HepG2 (cell line): ENCODE measurements at regions of chr16 and their contacts with region 1.

Region 1: DNA sequence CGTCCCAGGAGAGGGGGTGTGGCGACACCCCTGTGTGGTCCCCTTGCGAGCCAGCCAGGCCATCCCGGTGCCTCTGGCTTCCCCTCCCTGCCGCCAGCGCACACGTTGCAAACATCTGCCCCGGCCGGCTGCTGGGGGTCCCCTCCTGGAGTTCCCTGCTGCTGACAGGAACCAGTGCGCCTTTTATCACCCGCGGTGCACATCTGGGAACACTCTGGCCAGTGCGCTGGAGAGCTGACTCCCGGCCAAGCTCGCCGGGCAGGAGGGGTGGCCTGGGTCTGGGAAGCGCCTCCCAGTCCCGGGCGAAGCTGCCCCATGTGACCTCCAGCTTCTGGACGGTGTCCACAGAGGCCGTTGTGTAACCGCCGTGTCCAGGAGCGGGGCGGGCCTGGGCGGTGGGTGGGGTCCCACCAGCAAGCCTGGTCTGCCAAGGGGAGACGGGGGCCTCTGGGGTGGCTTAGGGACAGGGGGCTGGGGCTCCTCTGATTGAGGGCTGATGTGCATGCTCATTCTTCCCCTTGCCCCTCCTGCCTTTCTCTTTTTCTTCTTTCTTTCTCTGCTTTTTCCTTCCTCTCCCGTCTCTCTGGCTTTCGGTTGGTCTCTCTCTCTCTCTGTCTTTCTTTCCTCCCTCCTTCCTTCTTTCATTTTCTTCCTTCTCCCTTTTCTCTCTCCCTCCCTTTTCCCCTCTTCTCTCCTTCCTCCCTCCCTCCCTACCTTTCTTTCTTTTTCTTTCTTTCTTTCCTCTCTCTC is 25.2 kb upstream of the CIBAR2 start:
- DNase-seq: peak; percentile 87
- ATAC-seq: peak; percentile 85
- H3K4me3 ChIP-seq: peak overlapping the region; percentile 49 to 76 (median 60)
- H3K27ac ChIP-seq: peak overlapping the region; percentile 80
- H3K4me1 ChIP-seq: peaks cover 85% of the 10 kb centered on the region
- H3K27me3 ChIP-seq: peaks cover 0 to 3% of the 10 kb centered on the region in 2 experiments; a peak in 2 of 5 replicates
- CTCF ChIP-seq: no peak; the same call in 1 of the 2 replicates
- EP300 ChIP-seq: no peak; a peak in 1 of 4 replicates
- POLR2A ChIP-seq: no peak; a peak in 2 of 4 replicates
- RAD21 ChIP-seq: no peak; the same call in 1 of the 2 replicates

Region 2: DNA sequence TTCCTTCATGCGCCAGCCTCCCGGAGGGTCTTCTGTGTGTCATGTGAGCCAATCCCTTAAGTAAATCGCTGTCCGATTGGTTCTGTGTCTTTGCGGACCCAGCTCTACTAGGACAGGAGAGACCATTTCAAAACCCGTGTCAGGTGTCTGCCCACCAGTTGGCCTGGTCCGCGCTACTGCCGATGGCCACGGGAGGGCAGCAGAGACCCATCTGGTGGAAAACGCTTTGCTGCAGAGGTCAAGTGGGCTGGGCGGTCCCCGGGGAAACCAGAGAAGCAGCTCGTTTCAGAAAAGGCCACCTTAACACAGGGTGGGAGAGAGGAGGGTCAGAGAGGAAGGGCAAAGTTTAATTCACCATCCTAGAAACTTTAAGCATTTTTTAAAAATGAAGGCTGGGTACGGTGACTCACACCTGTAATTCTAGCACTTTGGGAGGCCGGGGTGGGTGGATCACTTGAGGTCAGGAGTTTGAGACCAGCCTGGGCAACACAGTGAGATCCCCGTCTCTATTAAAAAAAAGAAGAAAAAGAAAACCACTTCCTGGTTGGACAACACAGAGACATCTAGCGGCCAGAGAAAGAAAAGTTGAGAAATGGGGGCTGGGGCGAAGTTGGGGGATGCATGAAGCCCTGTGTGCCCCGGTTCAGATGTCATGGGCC is 22.5 kb before region 1 on chr16:
- CTCF ChIA-PET with region 1: no interaction called
- POLR2A ChIA-PET with region 1: interaction called, 12 read pairs
- in situ Hi-C with region 1: no loop called
- intact Hi-C with region 1: no loop called
- DNase-seq: peak; percentile 78
- ATAC-seq: peak; percentile 88
- H3K4me3 ChIP-seq: 0 out of 6 replicates have a peak overlapping the region, but pooled peaks of 1 of the 3 experiments have one; percentile 0
- H3K27ac ChIP-seq: no peak overlapping the region
- H3K4me1 ChIP-seq: peaks cover 14% of the 10 kb centered on the region
- H3K27me3 ChIP-seq: peaks cover 15 to 44% of the 10 kb centered on the region in 2 experiments
- CTCF ChIP-seq: peak; percentile 99
- EP300 ChIP-seq: no peak
- POLR2A ChIP-seq: no peak
- RAD21 ChIP-seq: peak; percentile 99

Region 3: GRCh38 chr16:85126705-85127419 is 10.6 kb before region 1 on chr16:
- CTCF ChIA-PET with region 1: no interaction called
- POLR2A ChIA-PET with region 1: interaction called, 20 read pairs
- in situ Hi-C with region 1: no loop called
- intact Hi-C with region 1: no loop called
- DNase-seq: no peak
- ATAC-seq: peak; percentile 44
- H3K4me3 ChIP-seq: peak overlapping the region in 1 of 3 experiments; percentile 47; a peak in 1 of 6 replicates
- H3K27ac ChIP-seq: no peak overlapping the region
- H3K4me1 ChIP-seq: peaks cover 33% of the 10 kb centered on the region
- H3K27me3 ChIP-seq: peaks cover 13 to 52% of the 10 kb centered on the region in 2 experiments; a peak in 4 of 5 replicates
- CTCF ChIP-seq: peak; percentile 18; the same call in 1 of the 2 replicates
- EP300 ChIP-seq: no peak
- POLR2A ChIP-seq: no peak
- RAD21 ChIP-seq: no peak

Region 4: DNA sequence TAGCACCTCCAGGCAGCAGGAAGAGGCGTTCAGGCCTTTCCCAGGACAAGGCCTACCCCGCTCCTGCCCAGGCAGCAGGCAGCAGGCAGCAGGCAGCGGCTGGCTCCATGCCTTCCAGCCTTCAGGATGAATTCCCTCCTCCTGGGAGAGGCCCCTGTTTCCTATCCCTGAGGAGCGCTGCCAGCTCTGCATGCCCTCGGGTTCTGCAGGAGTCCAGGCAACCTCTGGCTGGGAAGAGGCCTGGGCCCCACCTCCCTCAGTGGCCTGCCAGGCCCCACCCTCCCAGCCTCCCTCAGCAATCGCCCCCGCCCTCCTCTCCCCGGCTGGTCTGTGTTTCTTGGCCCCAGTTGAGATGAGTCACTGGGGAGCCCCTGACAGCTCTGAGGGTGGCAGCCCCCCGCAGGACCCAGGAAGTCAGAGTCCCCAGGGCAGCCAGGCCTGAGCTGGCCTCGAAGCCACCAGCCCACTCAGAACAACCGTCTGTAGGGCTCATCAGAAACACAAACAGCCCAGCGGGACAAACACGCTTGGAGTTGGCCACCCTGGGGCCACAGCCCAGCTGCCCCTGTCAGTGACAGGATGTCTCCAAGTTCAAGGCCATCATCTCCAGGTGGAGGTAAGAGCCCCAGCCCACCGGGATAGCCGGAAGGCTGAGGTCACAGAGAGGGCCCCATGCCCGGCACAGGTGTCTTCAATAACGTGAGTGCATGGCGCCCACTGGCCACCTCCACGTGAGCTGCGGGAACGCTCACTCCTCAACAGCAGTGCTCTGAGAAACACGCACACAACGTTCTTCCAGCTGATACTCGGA is 14.3 kb after region 1 on chr16:
- CTCF ChIA-PET with region 1: no interaction called
- POLR2A ChIA-PET with region 1: interaction called, 293 read pairs
- in situ Hi-C with region 1: no loop called
- intact Hi-C with region 1: no loop called
- DNase-seq: no peak
- ATAC-seq: peak; percentile 70
- H3K4me3 ChIP-seq: peak overlapping the region in 1 of 3 experiments; percentile 56; a peak in 2 of 6 replicates
- H3K27ac ChIP-seq: no peak overlapping the region
- H3K4me1 ChIP-seq: peaks cover 68% of the 10 kb centered on the region
- H3K27me3 ChIP-seq: peaks cover 4 to 23% of the 10 kb centered on the region in 2 experiments
- CTCF ChIP-seq: peak; percentile 38
- EP300 ChIP-seq: no peak
- POLR2A ChIP-seq: no peak
- RAD21 ChIP-seq: no peak

Region 5: GRCh38 chr16:85162478-85163277 is 25.2 kb after region 1 on chr16:
- CTCF ChIA-PET with region 1: no interaction called
- POLR2A ChIA-PET with region 1: interaction called, 293 read pairs
- in situ Hi-C with region 1: no loop called
- intact Hi-C with region 1: loop called (anchors 2 kb)
- DNase-seq: no peak
- ATAC-seq: peak; percentile 7; the same call in 2 of the 3 replicates
- H3K4me3 ChIP-seq: peak overlapping the region; percentile 21 to 62 (median 35); a peak in 5 of 6 replicates
- H3K27ac ChIP-seq: peak overlapping the region; percentile 41
- H3K4me1 ChIP-seq: peaks cover 86% of the 10 kb centered on the region
- H3K27me3 ChIP-seq: peaks cover 0 to 12% of the 10 kb centered on the region in 2 experiments; a peak in 1 of 5 replicates
- CTCF ChIP-seq: peak; percentile 38
- EP300 ChIP-seq: no peak
- POLR2A ChIP-seq: no peak
- RAD21 ChIP-seq: no peak

Region 6: DNA sequence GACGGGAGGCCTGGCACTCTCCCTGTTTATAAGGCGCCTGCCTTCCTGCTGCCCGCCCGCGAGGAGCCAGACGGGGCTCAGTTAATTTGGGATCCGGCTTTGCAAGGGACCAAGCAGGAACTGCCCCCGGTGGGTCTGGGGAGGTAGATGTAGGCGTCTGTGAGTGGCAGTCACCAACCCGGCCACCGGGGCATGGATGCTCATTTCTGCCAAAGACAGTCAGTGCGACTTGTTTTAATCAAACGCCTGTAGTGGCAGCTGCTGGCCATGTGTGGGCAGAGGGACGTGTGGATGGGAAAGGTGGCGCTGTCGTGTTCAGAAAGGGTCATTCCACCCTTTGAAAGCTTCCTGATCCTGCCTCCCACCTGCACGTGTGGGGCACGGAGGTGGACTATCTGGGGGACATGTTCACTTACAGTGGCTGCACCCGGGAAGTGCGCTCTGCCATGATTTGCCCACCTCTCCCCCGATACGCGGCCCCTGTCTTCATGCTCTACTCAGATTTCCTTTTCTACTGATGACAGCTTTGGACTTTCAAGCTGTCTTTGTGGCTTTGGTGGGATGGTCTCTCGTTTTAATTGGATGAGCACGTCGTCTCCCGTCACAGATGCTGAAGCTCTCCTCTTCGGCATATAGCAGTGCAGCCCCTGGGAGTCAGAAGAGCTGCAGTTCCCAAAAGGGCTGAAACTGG is 35.1 kb after region 1 on chr16:
- CTCF ChIA-PET with region 1: interaction called, 4 read pairs
- POLR2A ChIA-PET with region 1: interaction called, 34 read pairs
- in situ Hi-C with region 1: no loop called
- intact Hi-C with region 1: loop called (anchors 2 kb)
- DNase-seq: peak; percentile 75
- ATAC-seq: peak; percentile 75
- H3K4me3 ChIP-seq: peak overlapping the region; percentile 38 to 72 (median 53)
- H3K27ac ChIP-seq: no peak overlapping the region
- H3K4me1 ChIP-seq: peaks cover 70% of the 10 kb centered on the region
- H3K27me3 ChIP-seq: peaks cover 13 to 37% of the 10 kb centered on the region in 2 experiments; a peak in 4 of 5 replicates
- CTCF ChIP-seq: peak; percentile 86
- EP300 ChIP-seq: no peak
- POLR2A ChIP-seq: no peak
- RAD21 ChIP-seq: peak; percentile 78

Region 7: DNA sequence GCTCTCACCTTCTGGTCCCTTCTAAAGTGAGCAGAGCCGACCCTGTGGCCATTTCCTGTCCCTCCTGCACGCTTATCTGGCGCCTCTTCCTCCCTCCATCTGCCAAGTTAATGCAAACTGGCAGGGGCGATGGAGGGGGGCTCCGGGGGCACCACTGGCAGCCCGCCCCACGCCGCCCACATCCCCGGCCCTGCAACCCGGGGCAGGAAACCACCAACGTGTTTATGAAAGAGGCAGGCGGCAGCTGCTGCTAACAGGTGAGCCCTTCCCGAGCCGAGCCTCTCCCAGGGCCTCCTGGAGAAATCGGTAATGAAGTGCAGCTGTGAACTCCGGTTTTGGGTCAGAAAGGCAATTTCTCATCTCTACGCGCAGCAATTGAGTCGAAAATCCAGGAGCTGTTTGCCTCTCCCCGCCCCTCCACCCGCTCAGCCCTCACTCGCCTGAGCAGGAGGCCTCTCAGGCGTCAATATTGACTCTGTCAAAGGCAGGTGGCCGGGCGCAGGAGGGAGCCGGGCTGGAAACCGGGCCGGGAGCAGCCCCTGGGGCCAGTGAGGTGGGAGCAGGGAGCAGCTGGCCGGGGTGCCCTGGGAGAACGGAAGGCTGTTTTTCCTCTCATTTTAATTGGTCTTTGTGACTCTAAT is 311.2 kb after region 1 on chr16:
- CTCF ChIA-PET with region 1: no interaction called
- POLR2A ChIA-PET with region 1: no interaction called
- in situ Hi-C with region 1: no loop called
- intact Hi-C with region 1: no loop called
- DNase-seq: peak; percentile 79
- ATAC-seq: peak; percentile 91
- H3K4me3 ChIP-seq: peak overlapping the region in 2 of 3 experiments; percentile 21 to 59; a peak in 3 of 6 replicates
- H3K27ac ChIP-seq: peak overlapping the region; percentile 68
- H3K4me1 ChIP-seq: peaks cover 59% of the 10 kb centered on the region
- H3K27me3 ChIP-seq: peaks cover 5 to 59% of the 10 kb centered on the region in 2 experiments
- CTCF ChIP-seq: peak; percentile 44; the same call in 1 of the 2 replicates
- EP300 ChIP-seq: peak in 1 of 2 experiments; percentile 85; a peak in 2 of 4 replicates
- POLR2A ChIP-seq: no peak
- RAD21 ChIP-seq: peak; percentile 20; the same call in 1 of the 2 replicates